ENCODE measurements at regions of chr2 and their contacts with region 1.

Region 1: DNA sequence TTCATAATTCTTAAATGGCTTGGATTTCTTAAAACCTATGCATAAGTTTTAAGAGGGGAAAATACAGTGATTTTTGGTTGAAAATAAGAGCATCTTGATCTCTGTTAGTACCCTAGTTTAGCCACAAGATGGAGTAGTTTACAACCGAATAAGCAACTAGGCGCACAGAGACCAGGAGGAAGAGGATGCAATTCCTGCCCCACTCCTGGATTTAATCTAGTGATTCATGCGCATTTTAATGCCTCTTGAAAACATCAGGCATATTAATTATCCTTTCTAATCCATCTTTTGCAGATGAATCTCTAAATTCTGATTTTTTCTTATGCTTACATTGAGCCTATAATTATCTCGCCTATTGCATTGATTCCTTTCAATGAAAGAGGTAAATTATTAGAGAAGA is 76.7 kb downstream of the MRPS9 start:
- DNase-seq: no peak
- ATAC-seq: peak; percentile 48

Region 2: GRCh38 chr2:105235388-105236054 is 121.0 kb after region 1 on chr2:
- intact Hi-C with region 1: loop called (anchors 5 kb)
- DNase-seq: peak; percentile 86
- ATAC-seq: peak; percentile 72

Region 3: DNA sequence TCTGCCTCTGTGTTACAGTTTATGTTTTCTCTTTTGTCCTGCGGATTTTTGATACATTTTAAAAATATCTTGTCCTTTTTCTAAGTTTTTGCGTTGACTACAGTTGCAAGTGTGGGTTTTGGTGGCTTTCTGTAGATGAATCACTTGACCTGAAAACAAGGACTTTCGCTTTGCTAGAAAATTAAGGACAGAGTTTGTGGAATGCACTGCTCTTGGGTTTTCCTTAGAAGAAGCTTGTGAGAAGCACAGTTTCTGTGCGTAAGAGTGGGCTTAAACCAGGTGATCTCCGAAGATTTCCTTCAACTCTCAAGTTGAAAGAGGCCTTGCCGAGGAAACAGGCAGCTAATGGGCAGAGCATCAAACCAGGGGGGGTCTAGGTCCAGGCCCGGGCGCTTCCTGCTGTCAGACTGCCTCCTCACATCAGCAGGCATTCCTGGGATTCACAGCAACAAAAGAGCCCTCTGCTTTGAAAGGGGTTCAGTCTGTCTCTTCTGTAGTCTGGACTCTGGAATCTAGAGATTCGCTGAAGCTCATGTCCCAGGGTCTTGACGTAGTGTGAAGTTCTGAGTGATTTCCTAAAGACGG is 647.5 kb after region 1 on chr2:
- intact Hi-C with region 1: no loop called
- DNase-seq: no peak
- ATAC-seq: no peak

Measured in left ventricle myocardium superior (tissue), 1 donor.